Spleen (tissue), 13 donors: ENCODE measurements at regions of chr6 and their contacts with region 1.

Region 1: DNA sequence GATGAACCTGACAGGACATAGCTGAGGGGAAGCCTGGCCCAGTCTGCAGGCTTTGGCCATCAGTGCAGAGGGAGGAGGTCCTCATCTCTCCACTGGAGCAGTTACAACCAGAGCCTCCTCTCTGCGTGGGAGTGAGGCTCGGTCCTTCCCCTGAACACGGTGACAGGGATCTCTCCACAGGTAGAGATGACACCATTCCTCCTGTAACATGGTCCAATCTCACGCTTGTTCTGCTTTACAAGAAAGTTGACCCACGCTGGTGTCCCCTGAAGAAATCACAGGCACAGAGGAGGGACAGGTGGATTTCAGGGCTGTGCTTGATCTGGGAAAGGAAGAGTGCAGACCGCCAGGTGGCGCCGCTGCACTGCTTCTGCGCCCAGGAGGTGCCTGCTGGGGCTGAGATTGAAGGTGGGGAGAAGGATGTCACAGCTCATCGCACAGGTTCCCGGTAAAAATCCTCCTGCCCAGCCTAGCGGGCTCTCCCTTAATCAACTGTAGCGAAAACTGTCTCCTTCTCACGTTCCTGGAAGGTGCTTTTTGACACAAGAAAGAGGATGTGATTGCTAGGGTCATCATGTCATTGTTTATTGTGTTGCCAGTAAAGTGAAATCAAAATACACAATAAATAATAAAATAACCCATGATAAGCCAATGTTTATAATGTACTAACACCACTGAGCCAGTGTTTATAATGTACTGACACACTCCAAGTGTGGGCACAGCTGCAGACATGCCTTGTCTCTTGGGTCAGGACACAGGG is 20.4 kb downstream of the HLA-G start:
- DNase-seq: peak; percentile 94
- H3K4me3 ChIP-seq: no peak overlapping the region
- H3K27ac ChIP-seq: no peak overlapping the region
- H3K4me1 ChIP-seq: peaks cover 0 to 19% (median 11%) of the 10 kb centered on the region in 6 donors
- H3K27me3 ChIP-seq: peaks cover 0 to 77% (median 24%) of the 10 kb centered on the region in 7 donors
- CTCF ChIP-seq: peak; percentile 78 to 94 (median 90)
- POLR2A ChIP-seq: no peak

Region 2: GRCh38 chr6:30013291-30013922 is 165.4 kb after region 1 on chr6:
- intact Hi-C with region 1: loop called (anchors 2 kb)
- DNase-seq: no peak
- H3K4me3 ChIP-seq: no peak overlapping the region
- H3K27ac ChIP-seq: no peak overlapping the region
- H3K4me1 ChIP-seq: peaks cover 0 to 5% (median 0%) of the 10 kb centered on the region in 6 donors
- H3K27me3 ChIP-seq: peaks cover 0 to 4% (median 0%) of the 10 kb centered on the region in 7 donors
- CTCF ChIP-seq: peak in 10 of 11 experiments; percentile 10 to 94 (median 78)
- POLR2A ChIP-seq: no peak

Region 3: DNA sequence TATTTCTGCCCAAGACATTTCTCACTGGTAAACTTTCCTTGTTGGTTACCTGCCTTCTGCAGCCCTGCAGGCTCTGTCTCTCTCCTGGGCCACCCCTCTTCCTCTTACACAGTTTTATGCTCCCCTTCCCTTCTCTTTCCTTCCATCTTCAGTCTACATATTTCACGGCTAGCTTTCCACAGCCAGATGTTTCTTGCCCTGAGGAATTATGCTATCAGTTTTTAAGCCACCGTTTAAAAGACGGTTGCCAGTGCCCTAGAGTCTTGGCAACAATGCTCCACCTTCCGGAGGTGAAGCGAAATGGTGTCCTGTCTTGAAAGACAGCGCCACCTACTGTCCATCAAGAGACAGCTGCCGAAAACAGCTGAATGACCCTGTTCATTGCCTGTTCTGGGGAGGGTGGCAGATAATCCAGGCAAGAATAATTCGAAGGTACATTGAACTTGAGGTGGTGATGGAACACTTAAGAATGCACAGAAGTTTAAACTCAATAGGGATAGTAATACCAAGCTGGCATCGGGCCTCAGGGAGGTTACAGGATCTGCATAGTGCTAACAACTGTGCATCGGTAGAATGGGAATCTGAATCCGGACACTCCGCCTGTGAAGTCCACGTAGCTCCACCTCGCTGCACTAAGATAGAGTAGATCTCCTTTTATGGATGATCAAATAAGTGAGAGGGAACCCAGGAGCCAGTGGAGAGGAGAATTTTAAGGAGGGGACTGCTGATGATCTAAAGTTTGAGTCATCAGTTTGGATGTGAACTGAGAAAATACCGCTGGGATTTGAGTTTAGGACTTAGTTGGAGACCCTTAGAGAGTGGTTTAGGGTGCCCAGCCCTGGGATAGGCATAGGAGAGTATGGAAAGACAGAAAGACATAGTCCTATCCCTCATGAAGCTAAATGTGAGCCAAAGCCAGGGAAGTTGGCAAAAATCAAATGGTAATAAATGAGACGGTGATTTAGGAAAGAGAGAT is 283.1 kb after region 1 on chr6:
- intact Hi-C with region 1: loop called (anchors 10 kb)
- DNase-seq: peak; percentile 77
- H3K4me3 ChIP-seq: no peak overlapping the region
- H3K27ac ChIP-seq: no peak overlapping the region
- H3K4me1 ChIP-seq: peaks cover 2 to 23% (median 17%) of the 10 kb centered on the region in 6 donors
- H3K27me3 ChIP-seq: peaks cover 0 to 88% (median 59%) of the 10 kb centered on the region in 7 donors
- CTCF ChIP-seq: peak; percentile 90 to 98 (median 93)
- POLR2A ChIP-seq: no peak